Calu3 (cell line): ENCODE measurements at regions of chr5 and their contacts with region 1.

Region 1: DNA sequence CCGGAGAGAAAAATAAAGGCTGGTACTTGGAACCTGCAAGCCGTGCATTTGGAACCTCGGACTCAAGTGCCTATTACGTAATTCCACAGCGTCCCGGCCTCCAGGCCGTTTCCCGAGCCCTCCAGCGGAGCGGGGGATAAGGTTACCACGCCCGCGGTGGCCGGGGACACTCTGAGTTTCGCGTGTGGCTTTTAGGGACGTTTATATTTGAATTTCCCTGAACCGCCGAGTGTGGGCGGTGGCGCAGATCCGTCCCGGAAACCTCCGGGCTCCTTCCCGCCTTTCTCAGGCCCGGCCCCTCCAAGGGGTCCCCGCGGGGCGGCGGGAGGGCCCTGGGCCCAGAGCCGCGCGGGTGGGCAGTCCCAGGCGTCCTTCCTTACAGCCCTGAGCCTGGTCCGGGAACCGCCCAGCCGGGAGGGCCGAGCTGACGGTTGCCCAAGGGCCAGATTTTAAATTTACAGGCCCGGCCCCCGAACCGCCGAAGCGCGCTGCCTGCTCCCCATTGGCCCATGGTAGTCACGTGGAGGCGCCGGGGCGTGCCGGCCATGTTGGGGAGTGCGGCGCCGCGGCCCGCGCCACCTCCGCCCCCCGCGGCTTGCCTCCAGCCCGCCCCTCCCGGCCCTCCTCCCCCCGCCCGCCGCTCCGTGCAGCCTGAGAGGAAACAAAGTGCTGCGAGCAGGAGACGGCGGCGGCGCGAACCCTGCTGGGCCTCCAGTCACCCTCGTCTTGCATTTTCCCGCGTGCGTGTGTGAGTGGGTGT is at the start of gene LMNB1:
- DNase-seq: peak; percentile 99
- H3K4me3 Mint-ChIP-seq: peak within 1 kb of the TSS; percentile 99
- H3K27ac Mint-ChIP-seq: peak within 1 kb of the TSS; percentile 62
- H3K4me1 Mint-ChIP-seq: peaks cover 11% of the 10 kb centered on the region
- H3K27me3 Mint-ChIP-seq: no peaks in the 10 kb centered on the region
- CTCF ChIP-seq: no peak
- total RNA-seq, gene LMNB1: 128 and 153 TPM in 2 replicates

Region 2: DNA sequence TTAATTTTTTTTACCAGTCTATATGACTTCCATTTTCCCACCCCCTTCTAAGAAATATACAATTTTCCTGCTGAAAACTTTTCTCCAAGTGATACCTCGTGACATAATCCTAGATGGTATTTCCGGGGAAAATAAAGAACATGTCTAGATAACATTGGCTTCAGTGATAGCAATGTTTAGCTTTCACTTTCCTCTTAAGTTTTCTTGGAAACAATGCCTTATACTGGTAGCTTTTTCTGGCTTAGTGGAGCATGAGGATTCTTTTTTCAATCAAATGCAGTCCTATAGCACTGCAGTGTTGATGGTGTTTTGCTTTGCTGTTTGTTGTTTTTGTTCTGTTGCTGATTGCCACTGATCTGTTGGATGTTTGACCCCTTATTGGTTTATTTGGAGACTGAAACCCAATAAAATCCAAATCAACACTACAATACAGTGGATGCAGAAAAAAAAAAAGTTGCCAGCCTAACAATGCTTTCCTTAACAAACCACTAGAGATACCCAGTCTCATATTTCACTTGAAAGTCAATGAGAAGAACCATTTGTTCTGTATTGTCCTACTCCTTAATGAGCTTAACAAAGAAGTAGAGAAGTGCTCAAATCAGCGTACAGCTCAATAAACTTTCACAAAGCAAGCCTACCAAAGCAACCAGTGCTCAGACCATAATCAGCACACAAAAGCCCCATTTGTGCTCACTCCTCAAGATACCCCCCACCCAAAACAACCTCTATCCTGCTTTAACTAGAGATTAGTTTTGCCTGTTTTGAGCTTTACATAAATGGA is 427.6 kb before region 1 on chr5:
- CTCF ChIA-PET with region 1: no interaction called
- intact Hi-C with region 1: loop called (anchors 10 kb)
- DNase-seq: no peak
- H3K4me3 Mint-ChIP-seq: no peak overlapping the region
- H3K27ac Mint-ChIP-seq: no peak overlapping the region
- H3K4me1 Mint-ChIP-seq: peaks cover 25% of the 10 kb centered on the region
- H3K27me3 Mint-ChIP-seq: no peaks in the 10 kb centered on the region
- CTCF ChIP-seq: no peak

Region 3: GRCh38 chr5:126656396-126657007 is 120.2 kb before region 1 on chr5:
- CTCF ChIA-PET with region 1: no interaction called
- intact Hi-C with region 1: loop called (anchors 5 kb)
- DNase-seq: peak; percentile 13
- H3K4me3 Mint-ChIP-seq: no peak overlapping the region
- H3K27ac Mint-ChIP-seq: no peak overlapping the region
- H3K4me1 Mint-ChIP-seq: no peaks in the 10 kb centered on the region
- H3K27me3 Mint-ChIP-seq: no peaks in the 10 kb centered on the region
- CTCF ChIP-seq: peak; percentile 82

Region 4: DNA sequence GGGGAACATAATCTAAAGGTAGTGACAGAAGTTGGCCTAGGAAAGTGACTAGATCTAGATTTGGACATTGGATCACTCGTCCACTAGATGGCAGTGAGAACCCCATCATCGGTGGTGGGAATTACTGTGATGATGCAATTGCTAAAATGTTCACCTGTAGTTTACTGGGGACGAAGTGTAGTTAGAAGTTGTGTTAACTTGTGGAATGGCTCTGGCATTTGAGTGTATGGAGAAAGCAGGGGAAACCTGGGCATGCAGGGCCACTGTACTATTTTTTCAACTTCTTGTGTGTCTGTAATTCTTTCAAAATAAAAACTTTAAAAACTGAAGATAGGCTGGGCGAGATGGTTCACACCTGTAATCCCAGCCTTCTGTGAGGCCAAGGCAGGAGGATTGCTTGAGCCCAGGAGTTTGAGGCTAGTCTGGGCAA is 100.5 kb before region 1 on chr5:
- CTCF ChIA-PET with region 1: interaction called, 30 read pairs
- intact Hi-C with region 1: loop called (anchors 1 kb)
- DNase-seq: peak; percentile 71
- H3K4me3 Mint-ChIP-seq: no peak overlapping the region
- H3K27ac Mint-ChIP-seq: no peak overlapping the region
- H3K4me1 Mint-ChIP-seq: peaks cover 16% of the 10 kb centered on the region
- H3K27me3 Mint-ChIP-seq: no peaks in the 10 kb centered on the region
- CTCF ChIP-seq: peak; percentile 74

Region 5: GRCh38 chr5:126801992-126802294 is 25.3 kb after region 1 on chr5:
- CTCF ChIA-PET with region 1: interaction called, 10 read pairs
- intact Hi-C with region 1: no loop called
- DNase-seq: no peak
- H3K4me3 Mint-ChIP-seq: no peak overlapping the region
- H3K27ac Mint-ChIP-seq: no peak overlapping the region
- H3K4me1 Mint-ChIP-seq: peaks cover 23% of the 10 kb centered on the region
- H3K27me3 Mint-ChIP-seq: no peaks in the 10 kb centered on the region
- CTCF ChIP-seq: no peak

Region 6: DNA sequence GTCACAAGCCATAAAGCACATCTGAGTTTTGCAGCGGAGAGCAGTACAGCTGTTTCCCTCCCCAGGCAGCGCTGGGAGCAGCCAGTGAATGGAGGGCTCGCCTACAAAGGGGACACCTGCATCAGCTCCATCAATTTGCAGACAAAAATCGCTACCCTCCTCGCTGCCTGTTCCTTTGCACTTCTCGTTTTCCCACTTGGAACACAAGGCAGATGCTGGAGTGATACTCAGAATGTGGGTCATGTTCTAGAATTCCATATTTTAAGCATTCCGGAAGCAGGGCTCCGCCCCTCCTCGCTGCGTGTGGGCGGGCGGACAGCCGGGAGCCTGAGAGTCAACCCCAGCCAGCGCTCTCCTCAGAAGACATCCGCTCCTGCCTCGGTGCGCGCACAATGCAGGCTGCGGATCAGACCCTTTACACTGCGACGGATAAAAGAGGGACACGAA is 92.4 kb after region 1 on chr5:
- CTCF ChIA-PET with region 1: no interaction called
- intact Hi-C with region 1: no loop called
- DNase-seq: no peak
- H3K4me3 Mint-ChIP-seq: no peak overlapping the region
- H3K27ac Mint-ChIP-seq: no peak overlapping the region
- H3K4me1 Mint-ChIP-seq: no peaks in the 10 kb centered on the region
- H3K27me3 Mint-ChIP-seq: no peaks in the 10 kb centered on the region
- CTCF ChIP-seq: no peak